ENCODE measurements at regions of chr9 and their contacts with region 1.

Region 1: DNA sequence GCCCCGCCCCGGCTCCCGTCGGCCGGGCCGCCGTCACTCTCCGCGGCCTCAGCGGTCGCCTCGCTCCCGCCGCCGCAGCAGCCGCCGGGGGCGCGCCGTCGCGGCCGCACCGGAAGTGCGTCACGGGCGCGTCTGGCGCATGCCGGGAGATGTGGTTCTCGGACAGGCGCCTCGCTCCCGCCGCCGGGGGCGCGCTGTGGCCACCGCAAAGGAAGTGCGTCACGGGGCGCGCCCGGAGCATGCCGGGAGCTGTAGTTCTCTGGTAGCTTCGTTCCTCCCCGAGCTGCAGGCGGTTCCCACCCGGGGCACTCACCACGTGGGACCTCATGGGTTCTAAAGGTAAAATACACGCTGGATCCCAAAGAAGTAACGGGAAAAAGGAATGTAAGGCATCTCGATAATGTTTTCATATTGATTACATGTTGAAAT is at the start of gene UBAC1:
- DNase-seq: peak; percentile 95 to 97
- ATAC-seq: peak; percentile 84 to 96 (median 93)
- H3K4me3 ChIP-seq: peak within 1 kb of the TSS; percentile 53 to 97 (median 90)
- H3K27ac ChIP-seq: peak within 1 kb of the TSS; percentile 81 to 98 (median 96)
- H3K4me1 ChIP-seq: peaks cover 4 to 47% (median 38%) of the 10 kb centered on the region in 9 donors
- H3K27me3 ChIP-seq: no peaks in the 10 kb centered on the region
- CTCF ChIP-seq: peak; percentile 17 to 67 (median 51)
- total RNA-seq, gene UBAC1: 73.8 to 138 (median 85.4) TPM

Region 2: GRCh38 chr9:135516132-135516860 is 445.0 kb before region 1 on chr9:
- intact Hi-C with region 1: no loop called
- DNase-seq: no peak
- ATAC-seq: peak in 5 of 8 donors; percentile 42 to 77 (median 48)
- H3K4me3 ChIP-seq: no peak overlapping the region
- H3K27ac ChIP-seq: peak overlapping the region in 3 of 10 donors; percentile 25 to 52 (median 44)
- H3K4me1 ChIP-seq: peaks cover 0 to 7% (median 0%) of the 10 kb centered on the region in 9 donors
- H3K27me3 ChIP-seq: peaks cover 0 to 3% (median 0%) of the 10 kb centered on the region in 7 donors
- CTCF ChIP-seq: no peak

Region 3: DNA sequence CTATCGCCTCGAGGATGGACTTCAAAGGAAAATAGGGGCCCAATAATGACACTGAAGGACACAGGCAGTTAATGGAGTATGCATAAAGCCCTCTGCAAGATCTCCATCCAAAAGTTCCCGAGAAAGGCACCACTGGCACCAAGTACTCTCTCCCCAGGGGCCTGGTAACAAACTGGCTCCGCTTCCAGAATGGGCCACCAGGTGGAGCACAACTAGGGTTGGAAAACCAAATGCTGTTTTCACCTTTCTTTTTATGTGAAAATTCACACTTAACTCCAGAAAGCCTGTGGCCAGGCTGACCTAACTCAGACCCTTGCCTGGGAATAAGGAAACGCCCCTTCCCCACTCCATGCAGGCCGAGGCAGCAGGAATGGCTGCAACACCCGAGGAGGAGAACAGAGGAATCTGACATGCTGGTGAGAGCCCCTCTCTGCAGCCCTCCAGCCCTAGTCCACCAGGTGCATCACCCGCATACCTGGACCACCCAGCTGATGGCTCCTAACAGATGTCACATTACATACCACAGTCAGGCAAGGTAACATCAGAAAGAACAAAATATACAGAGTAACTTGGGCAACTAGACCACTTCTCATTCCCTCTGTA is 96.7 kb before region 1 on chr9:
- intact Hi-C with region 1: loop called in 2 of 10 experiments (anchors 5 to 10 kb)
- DNase-seq: peak; percentile 66 to 71
- ATAC-seq: peak in 6 of 8 donors; percentile 11 to 77 (median 38)
- H3K4me3 ChIP-seq: no peak overlapping the region
- H3K27ac ChIP-seq: no peak overlapping the region
- H3K4me1 ChIP-seq: peaks cover 0 to 12% (median 6%) of the 10 kb centered on the region in 9 donors
- H3K27me3 ChIP-seq: no peaks in the 10 kb centered on the region
- CTCF ChIP-seq: peak; percentile 71 to 92 (median 86)

Region 4: GRCh38 chr9:135907431-135908092 is 53.7 kb before region 1 on chr9 and contains the start of gene CAMSAP1:
- intact Hi-C with region 1: loop called in 7 of 10 experiments (anchors 2 to 5 kb)
- DNase-seq: peak; percentile 92 to 96
- ATAC-seq: peak; percentile 96 to 99 (median 98)
- H3K4me3 ChIP-seq: peak within 1 kb of the TSS; percentile 68 to 89 (median 86)
- H3K27ac ChIP-seq: peak within 1 kb of the TSS; percentile 74 to 94 (median 92)
- H3K4me1 ChIP-seq: peaks cover 4 to 58% (median 49%) of the 10 kb centered on the region in 9 donors
- H3K27me3 ChIP-seq: no peaks in the 10 kb centered on the region
- CTCF ChIP-seq: no peak
- total RNA-seq, gene CAMSAP1: 15.6 to 25.0 (median 20.6) TPM

Region 5: DNA sequence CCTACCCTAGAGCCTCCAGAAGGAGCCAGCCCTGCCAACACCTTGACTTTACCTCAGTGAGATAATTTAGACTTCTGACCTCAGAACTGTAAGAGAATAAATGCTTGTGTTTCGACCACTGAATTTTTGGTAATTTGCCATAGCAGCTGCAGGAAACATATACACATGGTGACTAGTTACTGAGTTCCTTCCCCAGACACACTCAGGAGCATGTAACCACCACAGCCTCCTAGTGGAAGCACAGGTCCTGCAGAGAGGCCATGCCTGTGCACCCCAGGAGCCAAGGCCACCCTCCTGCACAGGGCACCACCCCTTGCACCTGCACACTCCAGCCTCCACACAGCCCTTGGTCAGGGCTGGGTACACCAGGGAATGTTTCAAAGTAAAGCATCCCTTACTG is 46.4 kb before region 1 on chr9:
- intact Hi-C with region 1: loop called in 1 of 10 experiments (anchors 5 kb)
- DNase-seq: no peak
- ATAC-seq: no peak
- H3K4me3 ChIP-seq: no peak overlapping the region
- H3K27ac ChIP-seq: no peak overlapping the region
- H3K4me1 ChIP-seq: peaks cover 0 to 5% (median 0%) of the 10 kb centered on the region in 9 donors
- H3K27me3 ChIP-seq: no peaks in the 10 kb centered on the region
- CTCF ChIP-seq: no peak

Region 6: DNA sequence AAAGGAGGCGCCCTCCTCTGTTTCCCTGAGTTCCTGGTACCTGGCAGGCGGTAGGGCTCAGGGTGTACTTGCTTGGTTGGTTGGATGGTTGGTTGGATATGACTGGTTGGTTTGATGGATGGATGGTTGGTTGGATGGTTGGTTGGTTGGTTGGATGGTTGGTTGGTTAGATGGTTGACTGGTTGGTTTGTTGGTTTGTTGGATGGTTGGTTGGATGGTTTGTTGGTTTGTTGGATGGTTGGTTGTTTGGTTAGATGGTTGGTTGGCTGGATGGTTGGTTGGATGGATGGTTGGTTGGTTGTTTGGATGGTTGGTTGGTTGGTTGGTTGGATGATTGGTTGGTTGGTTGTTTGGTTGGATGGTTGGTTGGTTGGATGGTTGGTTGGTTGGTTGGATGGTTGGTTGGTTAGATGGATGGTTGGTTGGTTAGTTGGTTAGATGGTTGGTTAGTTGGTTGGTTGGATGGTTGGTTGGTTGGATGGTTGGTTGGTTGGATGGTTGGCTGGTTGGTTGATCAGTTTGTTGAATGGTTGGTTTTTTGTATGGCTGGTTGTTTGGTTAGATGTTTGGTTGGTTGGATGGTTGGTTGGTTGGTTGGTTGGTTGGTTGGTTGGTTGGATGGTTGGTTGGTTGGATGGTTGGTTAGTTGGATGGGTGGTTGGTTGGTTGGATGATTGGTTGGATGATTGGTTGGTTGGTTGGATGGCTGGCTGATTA is 163.8 kb after region 1 on chr9:
- intact Hi-C with region 1: loop called in 3 of 10 experiments (anchors 2 kb)
- DNase-seq: no peak
- ATAC-seq: no peak
- H3K4me3 ChIP-seq: no peak overlapping the region
- H3K27ac ChIP-seq: no peak overlapping the region
- H3K4me1 ChIP-seq: peaks cover 0 to 20% (median 12%) of the 10 kb centered on the region in 9 donors
- H3K27me3 ChIP-seq: peaks cover 0 to 35% (median 13%) of the 10 kb centered on the region in 7 donors
- CTCF ChIP-seq: no peak

Region 7: GRCh38 chr9:136283291-136284235 is 322.3 kb after region 1 on chr9:
- intact Hi-C with region 1: loop called in 1 of 10 experiments (anchors 5 kb)
- DNase-seq: peak; percentile 71 to 78
- ATAC-seq: peak; percentile 93 to 98 (median 94)
- H3K4me3 ChIP-seq: peak overlapping the region in 9 of 10 donors; percentile 16 to 45 (median 30)
- H3K27ac ChIP-seq: peak overlapping the region in 9 of 10 donors; percentile 10 to 75 (median 53)
- H3K4me1 ChIP-seq: peaks cover 0 to 13% (median 6%) of the 10 kb centered on the region in 9 donors
- H3K27me3 ChIP-seq: peaks cover 0 to 59% (median 43%) of the 10 kb centered on the region in 7 donors
- CTCF ChIP-seq: peak; percentile 81 to 89 (median 87)

Measured in heart right ventricle (tissue), 16 donors.